GM12878 (cell line): ENCODE measurements at regions of chr17 and their contacts with region 1.

Region 1: DNA sequence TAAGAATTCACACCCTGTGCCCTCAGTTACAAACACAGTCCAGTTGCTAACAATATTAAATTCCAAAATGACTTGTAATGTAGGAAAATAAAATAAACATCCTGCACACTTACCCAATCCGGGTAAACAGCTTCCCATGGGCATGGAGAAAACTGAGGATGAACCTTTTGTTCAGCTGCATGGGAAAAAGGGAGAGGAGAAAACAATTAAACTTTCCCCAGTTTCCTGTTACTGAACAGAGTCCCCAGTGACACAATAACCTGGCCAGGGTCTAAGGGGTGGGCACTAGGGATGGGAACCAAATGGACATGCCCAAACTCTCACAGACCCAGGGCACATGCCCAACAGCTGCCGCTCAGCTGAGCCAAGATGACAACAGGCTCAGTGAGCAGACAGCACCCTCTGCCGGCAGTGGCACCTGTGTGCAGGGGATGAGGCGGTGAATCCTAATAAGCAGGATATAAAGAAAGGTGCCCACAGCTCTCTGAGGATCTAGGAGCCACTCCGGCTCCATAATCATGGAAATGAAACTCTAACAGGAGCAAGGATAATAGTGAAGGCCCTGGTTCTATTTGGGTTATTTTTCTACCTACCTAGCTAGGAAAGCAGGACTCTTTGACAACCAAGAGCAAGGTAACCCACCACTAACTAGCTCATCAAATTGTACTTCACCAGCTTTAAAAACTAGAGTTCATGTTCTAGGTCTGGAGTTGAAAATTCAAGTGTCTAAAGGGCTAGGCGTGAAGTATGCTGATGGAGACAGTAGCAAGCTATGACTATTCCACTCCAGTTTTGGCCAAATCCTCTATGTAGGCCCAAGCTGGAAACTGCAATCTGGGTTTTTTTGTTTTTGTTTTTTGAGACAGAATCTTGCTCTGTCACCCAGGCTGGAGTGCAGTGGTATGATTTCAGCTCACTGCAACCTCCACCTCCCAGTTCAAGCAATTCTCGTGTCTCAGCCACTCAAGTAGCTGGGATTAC is 58.8 kb downstream of the SMG6 start:
- DNase-seq: no peak
- ATAC-seq: peak; percentile 88
- H3K4me3 ChIP-seq: no peak overlapping the region
- H3K27ac ChIP-seq: peak overlapping the region; percentile 84
- H3K4me1 ChIP-seq: peaks cover 25% of the 10 kb centered on the region
- H3K27me3 ChIP-seq: no peaks in the 10 kb centered on the region
- CTCF ChIP-seq: peak; percentile 97 to 98 (median 98); a peak in 5 of 6 replicates
- EP300 ChIP-seq: no peak
- POLR2A ChIP-seq: no peak
- RAD21 ChIP-seq: peak; percentile 100

Region 2: GRCh38 chr17:2064980-2065785 is 179.7 kb before region 1 on chr17:
- CTCF ChIA-PET with region 1: interaction called, 265 read pairs
- POLR2A ChIA-PET with region 1: interaction called, 4 read pairs
- RAD21 ChIA-PET with region 1: interaction called, 271 read pairs
- SMC1A ChIA-PET with region 1: interaction called, 141 read pairs
- in situ Hi-C with region 1: loop called (anchors 10 kb)
- intact Hi-C with region 1: loop called (anchors 5 kb)
- DNase-seq: no peak
- ATAC-seq: peak; percentile 72
- H3K4me3 ChIP-seq: no peak overlapping the region
- H3K27ac ChIP-seq: peak overlapping the region; percentile 34
- H3K4me1 ChIP-seq: peaks cover 47% of the 10 kb centered on the region
- H3K27me3 ChIP-seq: no peaks in the 10 kb centered on the region
- CTCF ChIP-seq: peak; percentile 44 to 61 (median 50)
- EP300 ChIP-seq: no peak
- POLR2A ChIP-seq: peak; percentile 73; the same call in 1 of the 2 replicates
- RAD21 ChIP-seq: peak; percentile 61

Region 3: DNA sequence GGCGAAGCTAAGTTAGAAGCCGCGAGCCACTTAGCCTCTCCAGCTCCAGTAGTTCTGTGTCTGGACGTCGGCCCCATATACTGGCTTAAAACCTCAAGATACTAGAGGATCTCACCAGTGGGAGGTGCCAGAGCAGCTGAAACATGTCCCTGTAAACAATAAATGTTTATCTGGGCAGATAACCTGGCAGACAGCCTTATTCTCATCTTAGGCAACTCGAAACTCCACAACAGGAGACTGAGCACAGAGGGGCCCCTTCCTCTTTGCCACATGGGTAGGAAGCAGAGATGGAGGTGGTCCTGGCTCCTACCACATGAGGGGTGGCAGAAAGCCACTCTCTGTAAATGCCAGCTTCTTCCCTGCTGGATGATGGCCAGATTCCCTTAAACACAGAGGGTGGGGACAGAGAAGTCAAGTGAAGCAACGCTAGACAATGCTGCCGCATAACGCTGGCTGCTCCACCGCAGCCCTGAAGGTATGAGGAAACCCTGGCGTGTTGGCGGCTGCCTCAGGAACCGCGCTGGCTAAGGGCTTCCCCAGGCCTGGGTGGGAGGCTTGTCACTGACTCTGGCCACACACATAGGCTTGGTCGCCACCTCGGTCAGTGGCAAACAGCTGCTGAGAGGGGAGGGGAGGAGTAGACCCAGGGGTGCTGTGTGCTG is 122.1 kb before region 1 on chr17:
- CTCF ChIA-PET with region 1: interaction called, 33 read pairs
- POLR2A ChIA-PET with region 1: no interaction called
- RAD21 ChIA-PET with region 1: interaction called, 27 read pairs
- SMC1A ChIA-PET with region 1: interaction called, 10 read pairs
- in situ Hi-C with region 1: no loop called
- intact Hi-C with region 1: no loop called
- DNase-seq: no peak
- ATAC-seq: peak; percentile 79
- H3K4me3 ChIP-seq: no peak overlapping the region
- H3K27ac ChIP-seq: peak overlapping the region; percentile 65
- H3K4me1 ChIP-seq: peaks cover 23% of the 10 kb centered on the region
- H3K27me3 ChIP-seq: no peaks in the 10 kb centered on the region
- CTCF ChIP-seq: 0 out of 6 replicates have a peak, but pooled peaks of 2 of the 3 experiments have one; percentile 1 to 7
- EP300 ChIP-seq: no peak
- POLR2A ChIP-seq: no peak
- RAD21 ChIP-seq: peak; percentile 19; the same call in 1 of the 2 replicates

Region 4: DNA sequence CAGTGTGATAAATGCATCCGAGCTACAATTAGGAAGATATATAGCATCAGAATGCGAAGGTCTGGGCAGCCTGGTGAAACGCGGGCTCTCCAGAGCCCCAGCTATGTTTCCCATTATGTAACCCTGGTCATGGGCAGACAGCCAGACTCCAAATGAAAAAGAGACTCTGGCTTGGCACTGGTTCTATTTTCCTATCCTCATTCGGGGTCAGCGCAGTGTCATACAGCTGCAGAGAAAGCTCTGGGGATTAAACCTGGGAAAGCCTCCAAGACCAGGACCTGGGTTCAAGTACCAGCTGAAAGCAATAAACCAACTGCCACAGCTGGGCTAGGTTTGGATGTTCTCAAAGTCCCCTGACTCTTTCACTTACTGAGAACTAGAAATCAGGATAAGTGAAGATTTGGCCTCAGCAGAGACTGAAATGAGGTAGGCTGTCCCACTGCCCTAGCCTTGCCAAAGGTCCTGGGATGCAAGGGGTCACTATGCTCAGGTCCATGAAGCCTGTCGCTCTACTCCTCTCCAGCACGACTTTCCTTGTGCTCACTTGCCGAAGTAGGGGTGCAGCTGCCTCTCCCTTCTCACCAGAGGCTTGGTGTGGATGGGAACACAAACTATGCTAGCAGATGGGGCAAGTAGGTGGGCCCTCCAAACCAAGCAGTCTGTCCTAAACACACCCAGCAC is 65.1 kb before region 1 on chr17:
- CTCF ChIA-PET with region 1: interaction called, 23 read pairs
- POLR2A ChIA-PET with region 1: interaction called, 4 read pairs
- RAD21 ChIA-PET with region 1: interaction called, 8 read pairs
- SMC1A ChIA-PET with region 1: interaction called, 17 read pairs
- in situ Hi-C with region 1: no loop called
- intact Hi-C with region 1: no loop called
- DNase-seq: no peak
- ATAC-seq: no peak
- H3K4me3 ChIP-seq: no peak overlapping the region
- H3K27ac ChIP-seq: no peak overlapping the region
- H3K4me1 ChIP-seq: no peaks in the 10 kb centered on the region
- H3K27me3 ChIP-seq: no peaks in the 10 kb centered on the region
- CTCF ChIP-seq: no peak
- EP300 ChIP-seq: no peak
- POLR2A ChIP-seq: no peak
- RAD21 ChIP-seq: no peak

Region 5: DNA sequence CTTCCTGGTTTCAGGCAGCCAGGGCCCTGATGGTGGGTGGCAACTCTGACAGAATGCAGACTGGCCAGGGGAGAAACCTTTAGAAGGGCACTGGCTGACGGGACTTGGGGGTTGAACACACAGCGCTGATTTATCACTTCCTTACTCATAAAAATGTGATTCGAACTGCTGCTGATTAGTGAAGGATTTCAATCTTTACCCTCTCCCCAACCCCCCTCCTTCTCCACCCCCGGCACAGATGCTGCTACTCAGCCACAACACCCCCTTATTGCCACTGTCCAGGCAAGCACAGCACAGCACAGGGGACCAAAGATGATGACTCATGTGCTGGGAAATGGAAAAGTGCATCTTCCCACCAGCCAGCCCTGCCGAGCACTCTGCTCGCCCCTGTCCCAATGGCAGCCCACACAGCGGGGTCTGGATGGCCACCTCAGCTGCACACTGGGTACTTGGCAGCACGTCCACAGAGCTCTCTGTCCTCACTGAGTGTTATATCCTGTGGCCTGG is 11.3 kb before region 1 on chr17:
- CTCF ChIA-PET with region 1: interaction called, 16 read pairs
- POLR2A ChIA-PET with region 1: interaction called, 3 read pairs
- RAD21 ChIA-PET with region 1: interaction called, 18 read pairs
- SMC1A ChIA-PET with region 1: interaction called, 15 read pairs
- in situ Hi-C with region 1: no loop called
- intact Hi-C with region 1: no loop called
- DNase-seq: no peak
- ATAC-seq: no peak
- H3K4me3 ChIP-seq: no peak overlapping the region
- H3K27ac ChIP-seq: no peak overlapping the region
- H3K4me1 ChIP-seq: peaks cover 43% of the 10 kb centered on the region
- H3K27me3 ChIP-seq: no peaks in the 10 kb centered on the region
- CTCF ChIP-seq: no peak
- EP300 ChIP-seq: no peak
- POLR2A ChIP-seq: no peak
- RAD21 ChIP-seq: no peak

Region 6: GRCh38 chr17:2282297-2282873 is 37.5 kb after region 1 on chr17:
- CTCF ChIA-PET with region 1: interaction called, 109 read pairs
- POLR2A ChIA-PET with region 1: interaction called, 5 read pairs
- RAD21 ChIA-PET with region 1: interaction called, 63 read pairs
- SMC1A ChIA-PET with region 1: interaction called, 74 read pairs
- in situ Hi-C with region 1: no loop called
- intact Hi-C with region 1: loop called (anchors 2 kb)
- DNase-seq: no peak
- ATAC-seq: peak; percentile 50; the same call in 2 of the 3 replicates
- H3K4me3 ChIP-seq: no peak overlapping the region
- H3K27ac ChIP-seq: peak overlapping the region; percentile 37
- H3K4me1 ChIP-seq: 0 out of 2 replicates have a peak, but pooled peaks cover 3% of the 10 kb centered on the region
- H3K27me3 ChIP-seq: no peaks in the 10 kb centered on the region
- CTCF ChIP-seq: peak; percentile 37 to 64 (median 59); a peak in 4 of 6 replicates
- EP300 ChIP-seq: no peak
- POLR2A ChIP-seq: no peak
- RAD21 ChIP-seq: peak; percentile 73